HAP-1 (cell line): ENCODE measurements at regions of chr3 and their contacts with region 1.

Region 1: GRCh38 chr3:141105828-141106628 is 54.9 kb downstream of the SPSB4 start:
- DNase-seq: peak; percentile 74 to 86
- H3K4me3 ChIP-seq: no peak overlapping the region
- H3K4me1 ChIP-seq: no peaks in the 10 kb centered on the region
- H3K27me3 ChIP-seq: no peaks in the 10 kb centered on the region

Region 2: DNA sequence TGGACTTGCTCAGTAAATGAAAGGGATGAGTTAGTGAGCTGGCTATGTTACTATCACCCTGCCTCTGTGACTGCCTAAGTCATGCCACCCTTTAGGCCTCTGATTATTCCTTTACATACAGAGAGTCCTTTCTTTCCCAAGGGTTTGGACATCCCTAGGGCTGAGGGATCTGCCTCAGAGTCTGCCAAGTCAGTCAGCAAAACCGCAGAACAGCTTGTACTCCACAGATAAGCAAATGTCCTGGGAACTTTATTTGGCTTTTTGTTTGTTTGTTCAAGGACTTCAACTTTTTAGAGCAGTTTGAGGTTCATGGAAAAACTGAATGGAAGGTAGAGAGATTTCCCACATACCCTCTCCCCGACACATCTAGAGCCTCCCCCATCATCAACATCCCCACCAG is 510.7 kb before region 1 on chr3:
- in situ Hi-C with region 1: no loop called
- DNase-seq: no peak
- H3K4me3 ChIP-seq: no peak overlapping the region
- H3K4me1 ChIP-seq: no peaks in the 10 kb centered on the region
- H3K27me3 ChIP-seq: 0 out of 2 replicates have a peak, but pooled peaks cover 3% of the 10 kb centered on the region

Region 3: DNA sequence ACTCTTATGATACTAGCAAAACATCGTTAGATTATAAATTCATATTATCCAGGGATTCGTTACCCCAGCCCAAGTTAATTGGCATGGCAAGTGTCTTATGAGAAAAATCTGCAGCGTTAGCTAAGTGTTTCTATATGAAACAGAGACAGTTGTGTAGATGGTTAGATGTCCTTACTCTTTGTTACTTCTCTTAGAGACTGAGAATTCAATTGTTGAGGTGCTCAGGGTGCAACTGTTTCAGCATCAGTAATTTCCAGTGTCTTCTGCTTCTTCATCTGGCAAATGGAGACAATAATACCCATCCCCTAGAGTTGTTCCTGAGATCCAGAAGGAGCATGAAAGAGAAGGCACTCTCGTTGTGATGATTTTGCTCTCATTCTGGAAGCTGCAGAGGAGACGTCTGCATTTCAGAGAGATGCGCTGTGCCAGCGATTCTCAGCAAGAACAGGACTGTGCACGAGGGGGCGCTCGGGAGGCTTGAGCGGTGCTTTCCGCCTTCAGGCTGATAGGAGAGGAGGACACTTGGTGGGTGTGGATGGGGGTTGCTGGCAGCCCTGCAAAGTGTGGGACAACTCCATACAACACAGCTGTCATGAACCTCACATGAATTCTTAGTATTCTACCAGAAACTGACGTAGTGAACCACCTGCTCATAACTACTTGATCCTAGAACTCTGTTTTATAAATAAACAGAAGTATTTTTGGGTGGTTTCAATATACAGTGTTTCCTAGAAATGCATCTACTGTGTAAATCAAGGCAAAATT is 94.6 kb before region 1 on chr3:
- in situ Hi-C with region 1: loop called (anchors 25 kb)
- DNase-seq: peak; percentile 65 to 92
- H3K4me3 ChIP-seq: no peak overlapping the region
- H3K4me1 ChIP-seq: no peaks in the 10 kb centered on the region
- H3K27me3 ChIP-seq: no peaks in the 10 kb centered on the region